Left ventricle myocardium superior (tissue), 1 donor: ENCODE measurements at regions of chr4 and their contacts with region 1.

Region 1: DNA sequence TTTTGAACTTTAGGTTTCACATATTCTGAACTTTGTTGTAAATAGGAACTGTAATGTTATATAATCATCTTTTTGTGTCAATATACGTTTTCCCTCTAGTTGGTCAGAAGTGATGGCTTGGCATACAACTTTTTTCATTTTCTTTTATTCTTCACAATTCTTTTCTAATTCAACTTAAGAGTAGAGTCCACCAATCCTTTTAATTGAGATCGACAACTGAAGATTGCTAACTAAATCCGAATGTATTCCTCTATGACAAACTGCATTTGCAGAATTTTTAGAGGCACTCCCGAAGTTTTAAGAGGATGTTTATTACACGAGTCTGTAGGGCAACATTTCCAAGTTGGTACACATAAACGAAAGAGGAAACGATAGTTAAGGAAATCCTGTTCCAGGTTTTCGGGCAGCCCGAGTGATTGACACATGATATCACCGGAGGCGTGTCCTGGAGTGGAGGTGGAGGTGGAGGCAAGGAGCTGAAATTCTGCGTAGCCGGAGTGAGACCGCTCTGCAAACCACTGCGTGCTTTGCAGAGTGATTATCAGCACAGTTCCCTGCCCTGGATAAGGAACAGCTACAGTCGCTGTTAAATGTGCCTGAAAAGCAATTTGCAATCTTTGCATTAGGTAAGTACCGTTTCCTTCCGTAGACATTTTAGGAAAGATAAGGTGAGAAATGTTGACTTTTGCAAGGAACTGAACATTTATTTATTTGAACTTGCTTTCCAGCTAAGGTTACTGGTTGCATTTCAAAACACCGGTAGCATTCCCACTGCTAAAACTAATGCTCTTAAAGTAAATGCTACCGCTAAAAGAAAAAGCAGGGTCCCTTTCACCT is at the start of gene SPRY1:
- DNase-seq: peak; percentile 86
- ATAC-seq: peak; percentile 86
- total RNA-seq, gene SPRY1: 45.8 TPM

Region 2: GRCh38 chr4:123244137-123244536 is 152.4 kb before region 1 on chr4:
- intact Hi-C with region 1: loop called (anchors 10 kb)
- DNase-seq: peak; percentile 73
- ATAC-seq: peak; percentile 97

Region 3: DNA sequence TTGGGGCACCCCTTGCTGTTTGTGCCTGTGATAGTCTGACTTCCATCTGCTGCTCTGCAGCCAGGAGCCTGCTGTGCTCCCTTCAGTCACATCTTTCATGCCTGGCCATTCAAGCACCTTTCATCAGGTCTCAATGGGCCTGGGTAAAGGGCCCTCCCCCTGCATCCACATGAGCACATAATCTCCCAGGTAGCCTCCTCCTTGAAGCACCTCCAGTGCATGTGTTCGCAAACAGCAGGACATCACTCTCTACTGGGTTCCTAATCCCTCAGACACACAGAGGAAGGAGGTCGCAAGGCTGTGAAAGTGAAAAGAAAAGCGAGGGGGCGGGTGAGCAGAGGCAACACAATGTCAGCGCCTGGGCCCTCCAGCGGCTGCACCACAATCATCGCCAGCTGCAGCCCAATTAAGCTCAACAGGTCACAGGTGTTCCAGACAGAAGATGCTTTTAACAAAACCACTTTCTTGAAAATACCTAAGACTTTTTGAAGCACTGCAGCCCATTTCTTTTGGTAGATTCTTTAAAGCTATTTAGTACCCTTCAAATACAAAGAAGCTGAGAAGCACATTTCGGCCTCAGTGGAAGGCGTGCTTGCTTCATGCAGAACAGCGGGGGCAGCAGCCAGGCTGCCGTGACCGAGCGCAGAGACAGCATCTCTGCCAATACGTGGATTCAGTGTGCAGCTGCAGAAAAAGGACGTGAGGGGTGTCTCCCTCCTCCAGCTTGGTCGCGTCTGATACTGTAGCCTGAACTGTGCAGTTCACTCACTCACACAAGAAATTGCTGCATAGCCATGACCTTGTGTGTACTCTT is 92.2 kb before region 1 on chr4:
- intact Hi-C with region 1: no loop called
- DNase-seq: peak; percentile 44
- ATAC-seq: peak; percentile 90